ENCODE measurements at regions of chr5 and their contacts with region 1.

Region 1: GRCh38 chr5:90409318-90410177 is at the start of gene CETN3:
- DNase-seq: peak; percentile 96
- ATAC-seq: peak; percentile 97
- H3K4me3 ChIP-seq: peak within 1 kb of the TSS; percentile 79
- H3K27ac ChIP-seq: peak within 1 kb of the TSS; percentile 90
- H3K4me1 ChIP-seq: no peaks in the 10 kb centered on the region; the same call in 1 of the 2 replicates
- H3K27me3 ChIP-seq: no peaks in the 10 kb centered on the region
- CTCF ChIP-seq: no peak
- POLR2A ChIP-seq: peak; percentile 92
- RAD21 ChIP-seq: no peak
- total RNA-seq, gene CETN3: 1.1 and 2.5 TPM in 2 replicates

Region 2: GRCh38 chr5:90474235-90475109 is 64.9 kb after region 1 on chr5 and contains the starts of genes MBLAC2 and POLR3G:
- CTCF ChIA-PET with region 1: no interaction called
- POLR2A ChIA-PET with region 1: no interaction called
- dilution Hi-C with region 1: no loop called
- in situ Hi-C with region 1: no loop called
- intact Hi-C with region 1: loop called (anchors 5 kb)
- DNase-seq: peak; percentile 87
- ATAC-seq: peak; percentile 91
- H3K4me3 ChIP-seq: peak within 1 kb of the TSS; percentile 75
- H3K27ac ChIP-seq: peak within 1 kb of the TSS; percentile 59
- H3K4me1 ChIP-seq: peaks cover 2% of the 10 kb centered on the region; the same call in 1 of the 2 replicates
- H3K27me3 ChIP-seq: no peaks in the 10 kb centered on the region
- CTCF ChIP-seq: peak; percentile 41
- POLR2A ChIP-seq: no peak
- RAD21 ChIP-seq: no peak
- total RNA-seq, gene MBLAC2: 3.2 and 5.0 TPM in 2 replicates
- total RNA-seq, gene POLR3G: 10.6 and 15.6 TPM in 2 replicates

Region 3: DNA sequence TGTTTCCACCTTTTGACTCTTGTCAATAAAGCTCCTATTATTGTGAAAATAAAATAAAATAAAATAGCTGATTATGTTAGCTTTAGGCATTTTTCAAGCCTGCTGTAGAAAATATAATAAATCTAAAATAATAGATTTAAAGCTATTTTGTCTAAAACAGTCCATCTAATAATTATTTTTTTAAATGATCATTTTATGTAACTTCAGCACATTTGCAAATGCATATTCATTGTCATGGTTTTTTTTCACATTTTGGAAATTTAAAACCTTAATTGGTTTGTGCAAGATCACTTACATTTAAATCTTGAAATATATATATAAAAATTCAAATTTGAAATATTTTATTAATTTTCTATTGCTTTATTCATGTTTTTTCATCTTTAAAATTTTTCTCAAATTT is 308.8 kb after region 1 on chr5:
- CTCF ChIA-PET with region 1: no interaction called
- POLR2A ChIA-PET with region 1: no interaction called
- dilution Hi-C with region 1: no loop called
- in situ Hi-C with region 1: no loop called
- intact Hi-C with region 1: no loop called
- DNase-seq: no peak
- ATAC-seq: no peak
- H3K4me3 ChIP-seq: no peak overlapping the region
- H3K27ac ChIP-seq: no peak overlapping the region
- H3K4me1 ChIP-seq: no peaks in the 10 kb centered on the region
- H3K27me3 ChIP-seq: no peaks in the 10 kb centered on the region
- CTCF ChIP-seq: no peak
- POLR2A ChIP-seq: no peak
- RAD21 ChIP-seq: no peak